Activated CD8-positive, alpha-beta T cell treated with anti-CD3 and anti-CD28 coated beads, Interleukin-2, amount 10 ng/mL, durations not matched to agents 7 days and 5 days (primary cell): ENCODE measurements at regions of chr3 and their contacts with region 1.

Region 1: DNA sequence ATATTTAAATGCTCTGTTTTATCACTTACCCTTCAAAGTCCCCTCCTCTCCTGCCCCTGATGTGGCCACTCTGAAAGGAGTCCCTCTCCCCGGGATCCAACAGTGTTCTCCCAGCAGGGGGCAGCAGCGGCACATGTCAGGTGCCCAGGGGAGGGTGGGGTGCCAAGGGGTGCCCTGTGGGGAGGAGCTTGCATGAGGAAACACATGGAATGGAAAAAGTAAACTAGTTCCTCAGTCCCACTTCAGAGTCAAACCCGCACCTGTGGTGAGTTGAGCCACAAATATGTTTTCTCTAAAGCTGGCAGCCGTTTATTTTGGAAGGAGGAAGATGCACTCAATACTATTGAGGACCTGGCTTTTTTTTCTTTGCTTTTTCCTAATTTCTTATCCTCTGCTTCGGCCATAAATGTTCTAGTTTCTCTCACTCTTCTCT is 30.1 kb upstream of the NRROS start:
- DNase-seq: peak; percentile 97
- ATAC-seq: peak; percentile 86
- H3K4me3 Mint-ChIP-seq: peak overlapping the region; percentile 64
- H3K27ac Mint-ChIP-seq: peak overlapping the region; percentile 81
- H3K4me1 Mint-ChIP-seq: peaks cover 56% of the 10 kb centered on the region
- H3K27me3 Mint-ChIP-seq: no peaks in the 10 kb centered on the region

Region 2: GRCh38 chr3:196620161-196620604 is 10.8 kb after region 1 on chr3:
- CTCF ChIA-PET with region 1: interaction called, 16 read pairs
- POLR2A ChIA-PET with region 1: no interaction called
- DNase-seq: peak; percentile 51
- ATAC-seq: peak; percentile 53
- H3K4me3 Mint-ChIP-seq: peak overlapping the region; percentile 37
- H3K27ac Mint-ChIP-seq: peak overlapping the region; percentile 73
- H3K4me1 Mint-ChIP-seq: peaks cover 55% of the 10 kb centered on the region
- H3K27me3 Mint-ChIP-seq: no peaks in the 10 kb centered on the region

Region 3: GRCh38 chr3:196639483-196640296 is 30.3 kb after region 1 on chr3 and contains the start of gene NRROS:
- CTCF ChIA-PET with region 1: interaction called, 107 read pairs
- POLR2A ChIA-PET with region 1: interaction called, 10 read pairs
- DNase-seq: peak; percentile 82
- ATAC-seq: peak; percentile 85
- H3K4me3 Mint-ChIP-seq: peak within 1 kb of the TSS; percentile 87
- H3K27ac Mint-ChIP-seq: peak within 1 kb of the TSS; percentile 90
- H3K4me1 Mint-ChIP-seq: peaks cover 82% of the 10 kb centered on the region
- H3K27me3 Mint-ChIP-seq: no peaks in the 10 kb centered on the region
- total RNA-seq, gene NRROS: 37.5 to 39.9 TPM

Region 4: GRCh38 chr3:196684548-196685407 is 75.4 kb after region 1 on chr3:
- CTCF ChIA-PET with region 1: interaction called, 211 read pairs
- POLR2A ChIA-PET with region 1: interaction called, 3 read pairs
- DNase-seq: peak; percentile 80
- ATAC-seq: peak; percentile 88
- H3K4me3 Mint-ChIP-seq: peak overlapping the region; percentile 43
- H3K27ac Mint-ChIP-seq: peak overlapping the region; percentile 78
- H3K4me1 Mint-ChIP-seq: peaks cover 29% of the 10 kb centered on the region
- H3K27me3 Mint-ChIP-seq: no peaks in the 10 kb centered on the region